PC-9 (cell line): ENCODE measurements at regions of chr2 and their contacts with region 1.

Region 1: DNA sequence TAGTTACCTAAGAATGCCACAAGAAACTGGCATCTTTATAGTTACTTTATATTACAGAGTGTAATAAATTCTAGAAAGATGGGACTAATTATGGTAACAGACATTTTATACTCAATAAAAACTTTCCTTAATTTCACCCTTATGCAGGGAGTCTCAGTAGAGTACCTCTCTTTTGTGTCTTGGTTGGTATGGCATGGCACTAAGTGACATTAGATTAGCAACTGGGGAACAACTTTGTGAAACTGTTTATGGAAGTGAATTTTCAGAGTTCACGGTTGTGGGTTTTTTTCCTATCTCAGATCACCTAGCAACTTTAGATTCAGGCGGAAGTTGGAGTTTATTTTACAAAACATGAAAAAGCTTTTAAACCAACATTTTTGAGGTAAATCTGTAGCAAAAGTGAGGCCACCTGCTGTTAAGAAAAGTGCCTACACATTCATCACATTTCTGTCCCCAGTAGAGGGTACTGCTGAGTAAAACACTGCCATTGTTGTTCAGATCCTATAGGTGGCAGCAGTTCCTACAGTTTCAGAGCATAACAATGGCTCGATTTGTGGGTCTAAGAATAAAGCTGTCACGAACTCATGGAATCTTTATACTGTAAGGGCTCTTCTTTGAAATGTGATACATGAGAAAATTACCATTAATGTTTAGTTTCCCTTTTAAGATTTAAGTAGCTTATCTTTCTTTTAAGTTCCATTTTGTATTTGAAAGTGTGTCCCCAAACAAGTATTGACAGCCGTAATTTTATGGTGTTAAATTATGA is 117.6 kb downstream of the CAMKMT start:
- DNase-seq: peak; percentile 51 to 83
- H3K4me3 ChIP-seq: no peak overlapping the region
- H3K27ac ChIP-seq: no peak overlapping the region
- H3K4me1 ChIP-seq: peaks cover 9% of the 10 kb centered on the region
- H3K27me3 ChIP-seq: no peaks in the 10 kb centered on the region
- CTCF ChIP-seq: peak; percentile 100

Region 2: DNA sequence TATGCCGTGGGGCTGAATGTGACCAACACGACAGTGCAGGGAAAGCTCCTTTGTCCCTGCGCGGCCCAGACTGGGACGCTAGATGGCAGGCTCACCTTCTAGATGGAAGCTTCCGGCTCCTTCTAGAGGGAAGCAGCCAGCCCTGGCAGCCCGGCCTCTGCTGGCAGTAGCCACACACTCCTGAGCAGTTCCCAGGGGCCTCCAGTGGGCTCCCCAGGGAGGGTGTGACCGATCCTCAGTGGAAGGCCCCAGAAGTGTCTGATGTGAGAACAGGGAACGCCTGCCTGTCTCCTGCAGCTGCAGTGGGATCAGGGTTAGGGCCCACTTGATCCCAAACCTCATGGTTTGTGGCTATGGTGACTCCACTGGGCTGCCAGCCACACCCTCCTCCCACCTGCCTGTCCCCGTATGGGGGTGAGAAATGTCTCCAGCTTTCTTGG is 435.0 kb before region 1 on chr2:
- CTCF ChIA-PET with region 1: interaction called, 12 read pairs
- POLR2A ChIA-PET with region 1: interaction called, 7 read pairs
- intact Hi-C with region 1: loop called (anchors 1 kb)
- DNase-seq: peak; percentile 79 to 86
- H3K4me3 ChIP-seq: no peak overlapping the region
- H3K27ac ChIP-seq: no peak overlapping the region
- H3K4me1 ChIP-seq: no peaks in the 10 kb centered on the region
- H3K27me3 ChIP-seq: no peaks in the 10 kb centered on the region
- CTCF ChIP-seq: peak; percentile 90

Region 3: GRCh38 chr2:44397447-44398175 is 81.7 kb before region 1 on chr2:
- CTCF ChIA-PET with region 1: interaction called, 28 read pairs
- POLR2A ChIA-PET with region 1: no interaction called
- intact Hi-C with region 1: loop called (anchors 1 kb)
- DNase-seq: no peak
- H3K4me3 ChIP-seq: no peak overlapping the region
- H3K27ac ChIP-seq: no peak overlapping the region
- H3K4me1 ChIP-seq: no peaks in the 10 kb centered on the region
- H3K27me3 ChIP-seq: no peaks in the 10 kb centered on the region
- CTCF ChIP-seq: no peak

Region 4: GRCh38 chr2:44549095-44549463 is 69.8 kb after region 1 on chr2:
- CTCF ChIA-PET with region 1: interaction called, 5 read pairs
- POLR2A ChIA-PET with region 1: no interaction called
- intact Hi-C with region 1: loop called (anchors 2 kb)
- DNase-seq: peak; percentile 68 to 96
- H3K4me3 ChIP-seq: peak overlapping the region; percentile 32
- H3K27ac ChIP-seq: peak overlapping the region; percentile 87
- H3K4me1 ChIP-seq: peaks cover 71% of the 10 kb centered on the region
- H3K27me3 ChIP-seq: no peaks in the 10 kb centered on the region
- CTCF ChIP-seq: no peak

Region 5: DNA sequence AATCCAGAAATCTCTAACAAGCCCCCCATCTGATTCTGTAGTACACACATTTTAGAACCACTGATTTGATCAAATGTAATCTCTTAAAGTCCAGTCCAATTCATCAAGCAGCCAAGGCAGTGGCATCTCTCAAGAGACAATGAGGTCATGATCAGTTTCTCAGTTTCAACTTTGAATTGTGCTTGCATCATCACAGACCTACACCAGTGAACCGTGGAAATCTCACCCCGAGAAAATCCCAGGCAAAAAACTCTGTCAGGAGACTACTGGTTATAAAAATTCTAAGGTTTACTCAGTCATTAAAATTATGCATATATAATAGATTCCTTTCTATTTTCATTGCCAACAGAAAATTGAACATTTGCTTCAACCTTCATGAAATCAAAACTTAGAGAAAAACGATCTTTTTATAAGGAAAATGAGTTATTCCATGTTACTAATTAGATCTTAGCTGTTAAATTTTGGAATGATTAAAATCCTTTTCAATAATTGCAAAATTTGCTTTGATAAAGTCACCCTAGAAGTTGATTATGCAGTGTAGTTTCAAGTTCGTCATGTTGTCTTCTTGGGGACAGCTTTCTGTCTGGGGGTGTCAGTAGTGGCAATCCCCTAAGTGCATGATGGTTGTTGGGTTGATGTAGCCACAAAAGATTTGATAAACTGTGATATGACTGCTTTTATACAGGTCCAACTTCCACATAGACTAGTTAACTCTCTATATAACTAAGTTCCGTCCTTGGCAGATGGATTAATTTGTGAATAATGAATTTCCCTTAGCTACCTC is 117.4 kb after region 1 on chr2:
- CTCF ChIA-PET with region 1: interaction called, 6 read pairs
- POLR2A ChIA-PET with region 1: interaction called, 3 read pairs
- intact Hi-C with region 1: loop called (anchors 5 kb)
- DNase-seq: no peak
- H3K4me3 ChIP-seq: no peak overlapping the region
- H3K27ac ChIP-seq: no peak overlapping the region
- H3K4me1 ChIP-seq: peaks cover 26% of the 10 kb centered on the region
- H3K27me3 ChIP-seq: no peaks in the 10 kb centered on the region
- CTCF ChIP-seq: no peak

Region 6: DNA sequence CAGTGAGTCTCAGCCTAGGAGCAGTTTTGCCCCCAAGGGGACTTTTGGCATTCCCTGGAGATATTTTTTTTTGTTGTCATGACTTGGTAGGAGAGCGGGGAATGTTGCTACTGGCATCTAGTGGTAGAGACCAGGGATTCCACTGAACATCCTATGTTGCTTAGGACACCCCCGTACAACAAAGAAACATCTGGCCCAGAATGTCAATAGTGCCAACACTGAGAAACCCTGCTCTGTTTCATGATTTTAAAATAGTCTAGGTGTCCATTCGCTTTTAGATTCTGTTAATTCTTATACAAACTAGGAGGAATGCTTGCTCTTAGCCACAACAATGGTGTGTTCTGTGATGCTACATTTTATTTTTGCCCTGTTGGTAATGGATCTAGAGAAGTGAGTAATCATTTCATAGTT is 236.4 kb after region 1 on chr2:
- CTCF ChIA-PET with region 1: interaction called, 17 read pairs
- POLR2A ChIA-PET with region 1: no interaction called
- intact Hi-C with region 1: loop called (anchors 1 kb)
- DNase-seq: peak; percentile 29 to 68
- H3K4me3 ChIP-seq: no peak overlapping the region
- H3K27ac ChIP-seq: no peak overlapping the region
- H3K4me1 ChIP-seq: no peaks in the 10 kb centered on the region
- H3K27me3 ChIP-seq: no peaks in the 10 kb centered on the region
- CTCF ChIP-seq: peak; percentile 73

Region 7: GRCh38 chr2:44955593-44956392 is 476.5 kb after region 1 on chr2:
- CTCF ChIA-PET with region 1: interaction called, 17 read pairs
- POLR2A ChIA-PET with region 1: no interaction called
- intact Hi-C with region 1: loop called (anchors 1 kb)
- DNase-seq: peak; percentile 58 to 83
- H3K4me3 ChIP-seq: peak overlapping the region; percentile 49; the same call in 1 of the 2 replicates
- H3K27ac ChIP-seq: no peak overlapping the region
- H3K4me1 ChIP-seq: peaks cover 10% of the 10 kb centered on the region
- H3K27me3 ChIP-seq: no peaks in the 10 kb centered on the region
- CTCF ChIP-seq: peak; percentile 91